H1 (cell line): ENCODE measurements at regions of chr11 and their contacts with region 1.

Region 1: GRCh38 chr11:13238879-13239514 is 38.6 kb upstream of the BMAL1 start:
- DNase-seq: peak in 1 of 2 experiments; percentile 68
- H3K4me3 ChIP-seq: no peak overlapping the region
- H3K27ac ChIP-seq: no peak overlapping the region
- H3K4me1 ChIP-seq: no peaks in the 10 kb centered on the region
- H3K27me3 ChIP-seq: no peaks in the 10 kb centered on the region
- CTCF ChIP-seq: peak; percentile 52 to 68 (median 67)
- EP300 ChIP-seq: no peak
- POLR2A ChIP-seq: no peak
- RAD21 ChIP-seq: peak; percentile 58 to 62

Region 2: DNA sequence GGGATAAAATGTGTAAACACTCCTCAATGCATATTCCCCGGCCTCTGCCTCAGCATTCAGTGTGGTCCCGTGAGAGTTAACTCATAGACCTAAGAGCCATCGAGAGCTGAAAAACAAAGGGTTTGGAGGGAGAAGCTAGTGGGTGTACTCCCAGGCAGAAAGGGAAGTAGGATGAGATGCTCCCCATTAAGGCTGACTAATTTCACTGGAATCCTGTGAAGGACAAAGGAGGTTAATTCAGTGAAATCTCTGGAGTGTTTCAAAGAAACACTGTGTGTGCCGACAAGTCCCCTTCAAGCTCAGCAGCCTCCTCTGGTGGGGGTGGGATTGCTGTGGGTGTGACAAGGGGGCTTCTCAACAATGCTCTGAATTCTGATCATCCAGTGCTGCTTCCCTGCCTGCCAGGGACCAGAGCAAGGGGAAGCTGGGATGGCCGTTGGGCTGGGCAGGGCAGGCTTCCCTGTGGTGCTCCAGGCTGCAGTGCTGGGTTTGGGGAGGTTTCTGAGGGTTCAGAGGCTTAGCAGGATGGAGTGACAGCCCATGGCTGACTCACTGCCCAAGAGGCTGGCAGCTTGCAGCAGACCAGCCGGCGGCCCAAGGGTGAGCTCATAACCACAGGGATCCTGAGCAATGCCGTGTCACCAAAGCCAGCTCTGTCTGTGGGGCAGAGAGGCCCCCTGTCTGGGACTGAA is 22.8 kb before region 1 on chr11:
- CTCF ChIA-PET with region 1: interaction called, 86 read pairs
- POLR2A ChIA-PET with region 1: no interaction called
- DNase-seq: peak in 1 of 2 experiments; percentile 56
- H3K4me3 ChIP-seq: no peak overlapping the region
- H3K27ac ChIP-seq: no peak overlapping the region
- H3K4me1 ChIP-seq: peaks cover 0 to 6% (median 2%) of the 10 kb centered on the region in 4 experiments; a peak in 2 of 7 replicates
- H3K27me3 ChIP-seq: no peaks in the 10 kb centered on the region
- CTCF ChIP-seq: no peak
- EP300 ChIP-seq: no peak
- POLR2A ChIP-seq: no peak
- RAD21 ChIP-seq: no peak

Region 3: GRCh38 chr11:13222285-13222684 is 16.7 kb before region 1 on chr11:
- CTCF ChIA-PET with region 1: interaction called, 19 read pairs
- POLR2A ChIA-PET with region 1: interaction called, 3 read pairs
- DNase-seq: peak in 1 of 2 experiments; percentile 33
- H3K4me3 ChIP-seq: no peak overlapping the region
- H3K27ac ChIP-seq: no peak overlapping the region
- H3K4me1 ChIP-seq: no peaks in the 10 kb centered on the region
- H3K27me3 ChIP-seq: no peaks in the 10 kb centered on the region
- CTCF ChIP-seq: no peak
- EP300 ChIP-seq: no peak
- POLR2A ChIP-seq: no peak
- RAD21 ChIP-seq: no peak

Region 4: DNA sequence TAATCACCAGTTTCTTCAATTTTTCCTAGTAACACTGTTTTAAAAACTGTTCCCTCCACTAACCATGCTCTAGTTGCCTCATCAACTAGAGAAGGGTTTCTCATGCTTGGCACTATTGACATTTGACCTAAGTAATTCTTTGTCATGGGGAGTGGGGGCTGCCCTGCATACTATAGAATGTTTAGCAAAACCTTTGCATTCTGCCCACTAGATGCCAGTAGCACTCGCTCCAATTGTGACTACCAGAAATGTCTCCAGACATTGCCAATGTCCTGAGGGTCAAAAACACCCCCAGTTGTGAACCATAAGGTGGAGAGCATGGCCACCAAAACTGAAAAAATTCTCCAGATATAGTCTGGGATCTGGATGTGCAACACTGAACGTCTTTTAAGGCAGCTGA is 11.0 kb after region 1 on chr11:
- CTCF ChIA-PET with region 1: interaction called, 81 read pairs
- POLR2A ChIA-PET with region 1: no interaction called
- DNase-seq: no peak
- H3K4me3 ChIP-seq: no peak overlapping the region
- H3K27ac ChIP-seq: no peak overlapping the region
- H3K4me1 ChIP-seq: no peaks in the 10 kb centered on the region
- H3K27me3 ChIP-seq: no peaks in the 10 kb centered on the region
- CTCF ChIP-seq: peak in 2 of 3 experiments; percentile 31 to 40; a peak in 3 of 4 replicates
- EP300 ChIP-seq: no peak
- POLR2A ChIP-seq: no peak
- RAD21 ChIP-seq: peak; percentile 35 to 51; a peak in 3 of 4 replicates